ENCODE measurements at regions of chr12 and their contacts with region 1.

Region 1: DNA sequence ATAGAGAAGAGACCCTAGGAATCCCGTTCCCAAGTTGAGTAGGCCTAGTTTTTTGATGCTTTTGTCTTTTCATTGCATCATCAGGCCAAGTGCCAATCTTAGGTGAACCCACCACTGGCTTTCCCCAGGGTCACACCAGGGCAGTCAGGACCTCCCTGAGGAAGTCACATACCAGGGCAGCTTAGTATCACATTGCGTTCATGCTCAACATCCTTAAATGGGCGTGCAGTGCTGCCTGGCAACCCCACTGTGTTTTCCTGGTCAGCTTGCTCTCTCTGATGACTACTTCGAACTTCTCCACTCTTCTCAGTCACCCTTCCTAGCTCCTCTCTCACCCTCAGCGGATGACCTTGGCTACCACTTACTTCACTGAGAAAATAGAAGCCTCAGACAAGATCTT is 9.0 kb downstream of the ASIC1 start:
- DNase-seq: no peak
- ATAC-seq: peak; percentile 65
- H3K4me3 ChIP-seq: no peak overlapping the region
- H3K27ac ChIP-seq: no peak overlapping the region
- H3K4me1 ChIP-seq: no peaks in the 10 kb centered on the region
- H3K27me3 ChIP-seq: no peaks in the 10 kb centered on the region; a peak in 2 of 4 replicates
- CTCF ChIP-seq: no peak
- EP300 ChIP-seq: no peak
- POLR2A ChIP-seq: no peak
- RAD21 ChIP-seq: no peak

Region 2: DNA sequence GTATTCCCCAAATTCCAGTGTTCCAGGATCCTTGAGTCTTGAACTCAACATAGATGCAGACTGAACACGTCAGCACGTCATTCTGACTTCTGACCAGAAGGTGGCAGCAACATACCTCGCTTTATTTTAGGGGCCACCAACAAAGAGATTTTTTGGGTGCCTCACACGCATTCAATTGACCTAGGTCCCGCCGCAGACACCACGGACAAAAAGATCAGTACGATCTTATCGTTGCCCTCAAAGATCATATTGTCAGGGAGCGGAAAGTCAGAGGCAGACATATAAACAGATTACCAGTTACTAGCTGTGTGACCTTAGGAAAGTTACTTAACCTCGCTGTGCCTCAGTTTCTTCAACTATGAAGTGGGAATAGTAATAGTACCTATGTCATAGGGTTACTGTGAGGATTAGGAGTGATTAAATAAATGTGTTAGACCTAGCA is 778.0 kb before region 1 on chr12:
- CTCF ChIA-PET with region 1: no interaction called
- POLR2A ChIA-PET with region 1: no interaction called
- RAD21 ChIA-PET with region 1: no interaction called
- SMC1A ChIA-PET with region 1: no interaction called
- in situ Hi-C with region 1: no loop called
- intact Hi-C with region 1: no loop called
- DNase-seq: peak; percentile 19
- ATAC-seq: peak; percentile 80
- H3K4me3 ChIP-seq: no peak overlapping the region
- H3K27ac ChIP-seq: no peak overlapping the region
- H3K4me1 ChIP-seq: no peaks in the 10 kb centered on the region
- H3K27me3 ChIP-seq: peaks cover 0 to 2% of the 10 kb centered on the region in 2 experiments; a peak in 2 of 4 replicates
- CTCF ChIP-seq: peak; percentile 69 to 86 (median 84)
- EP300 ChIP-seq: no peak
- POLR2A ChIP-seq: no peak
- RAD21 ChIP-seq: peak; percentile 85

Region 3: DNA sequence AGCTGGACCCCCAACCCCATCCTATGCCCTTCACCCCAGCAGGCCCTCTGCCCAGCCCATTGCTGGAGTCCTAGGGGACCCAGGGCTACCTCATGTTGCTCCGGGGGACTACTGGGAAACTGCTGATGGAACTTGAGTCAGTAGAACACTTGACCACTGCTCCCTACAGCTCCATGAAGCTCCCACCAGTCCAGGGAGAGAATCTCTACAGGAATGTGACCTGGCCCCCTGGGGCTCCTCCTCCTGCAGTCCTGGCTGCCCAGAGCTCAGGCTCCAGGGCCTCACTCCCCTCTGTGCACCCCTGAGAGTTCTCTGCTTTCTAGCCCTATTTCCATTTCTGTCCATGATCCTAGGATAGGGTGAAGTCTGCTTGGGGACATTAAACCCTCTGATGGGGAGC is 126.7 kb before region 1 on chr12:
- CTCF ChIA-PET with region 1: no interaction called
- POLR2A ChIA-PET with region 1: no interaction called
- RAD21 ChIA-PET with region 1: no interaction called
- SMC1A ChIA-PET with region 1: no interaction called
- in situ Hi-C with region 1: no loop called
- intact Hi-C with region 1: no loop called
- DNase-seq: no peak
- ATAC-seq: no peak
- H3K4me3 ChIP-seq: no peak overlapping the region
- H3K27ac ChIP-seq: no peak overlapping the region
- H3K4me1 ChIP-seq: no peaks in the 10 kb centered on the region
- H3K27me3 ChIP-seq: no peaks in the 10 kb centered on the region
- CTCF ChIP-seq: no peak
- EP300 ChIP-seq: no peak
- POLR2A ChIP-seq: no peak
- RAD21 ChIP-seq: no peak

Region 4: DNA sequence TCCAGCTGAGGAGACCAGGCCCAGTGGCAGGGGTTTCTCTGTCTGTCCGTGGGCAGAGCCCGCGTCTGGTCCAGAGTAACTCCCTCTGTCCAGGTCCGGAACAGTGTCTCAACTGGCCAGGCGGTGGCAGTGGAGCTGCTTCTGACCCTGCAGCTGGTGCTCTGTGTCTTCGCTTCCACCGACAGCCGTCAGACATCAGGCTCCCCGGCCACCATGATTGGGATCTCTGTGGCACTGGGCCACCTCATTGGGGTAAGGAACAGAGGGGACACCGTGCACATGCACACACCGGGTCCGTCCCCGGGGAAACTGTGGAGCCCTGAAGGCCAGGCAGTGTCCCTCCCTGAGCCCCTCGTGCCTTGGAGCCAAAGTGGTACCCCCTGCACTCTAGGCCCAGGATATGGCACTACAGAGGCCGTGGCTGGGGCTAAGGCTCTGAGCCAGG is 92.2 kb before region 1 on chr12:
- CTCF ChIA-PET with region 1: interaction called, 121 read pairs
- POLR2A ChIA-PET with region 1: no interaction called
- RAD21 ChIA-PET with region 1: interaction called, 74 read pairs
- SMC1A ChIA-PET with region 1: no interaction called
- in situ Hi-C with region 1: loop called (anchors 5 kb)
- intact Hi-C with region 1: no loop called
- DNase-seq: no peak
- ATAC-seq: peak; percentile 39
- H3K4me3 ChIP-seq: no peak overlapping the region
- H3K27ac ChIP-seq: no peak overlapping the region
- H3K4me1 ChIP-seq: no peaks in the 10 kb centered on the region
- H3K27me3 ChIP-seq: peaks cover 0 to 1% of the 10 kb centered on the region in 2 experiments; a peak in 1 of 4 replicates
- CTCF ChIP-seq: no peak
- EP300 ChIP-seq: no peak
- POLR2A ChIP-seq: no peak
- RAD21 ChIP-seq: no peak